ENCODE measurements at regions of chr17 and their contacts with region 1.

Region 1: DNA sequence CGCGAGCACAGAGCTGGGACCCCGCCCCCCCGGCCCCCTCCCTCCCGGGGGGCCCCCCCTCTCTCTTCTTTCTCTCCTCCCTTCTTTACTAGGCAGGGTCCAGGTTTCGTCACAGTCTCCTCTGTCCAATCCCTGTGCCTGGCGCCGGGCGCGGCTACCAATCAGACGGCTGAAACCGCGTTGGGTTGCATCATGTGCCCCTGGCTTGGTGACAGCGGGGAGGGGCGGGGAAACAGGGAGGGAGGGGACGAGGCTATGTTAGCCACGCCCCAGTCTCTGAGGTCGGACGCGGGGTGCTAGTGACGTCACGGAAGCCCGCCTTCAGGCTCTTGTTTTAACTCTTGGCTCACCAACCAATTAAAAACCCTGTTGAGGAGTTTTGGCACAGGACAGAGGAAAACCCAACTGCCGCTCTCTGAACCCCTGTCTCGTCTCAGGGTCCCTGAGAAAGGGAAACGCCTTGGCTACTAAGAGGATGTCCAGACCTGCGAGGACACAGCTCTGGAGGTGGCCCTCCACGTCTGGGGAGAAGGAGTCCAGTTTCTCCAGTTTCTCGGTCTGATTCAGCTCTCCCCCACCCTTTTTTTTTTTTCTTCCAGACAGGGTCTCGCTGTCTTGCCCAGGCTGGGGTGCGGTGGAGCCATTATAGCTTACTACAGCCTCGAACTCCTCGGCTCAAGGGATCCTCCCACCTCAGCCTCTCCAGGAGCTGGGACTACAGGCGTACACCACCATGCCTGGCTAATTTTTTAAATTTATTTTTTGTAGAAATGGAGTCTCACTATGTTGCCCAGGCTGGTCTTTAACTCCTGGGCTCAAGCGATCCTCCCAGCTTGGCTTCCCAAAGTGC is 439 bp upstream of the PLEKHH3 start:
- DNase-seq: peak; percentile 99
- H3K4me3 ChIP-seq: peak overlapping the region; percentile 89 to 91
- H3K27ac ChIP-seq: peak overlapping the region; percentile 95 to 96
- H3K4me1 ChIP-seq: peaks cover 72% of the 10 kb centered on the region
- H3K27me3 ChIP-seq: no peaks in the 10 kb centered on the region
- CTCF ChIP-seq: no peak
- POLR2A ChIP-seq: no peak

Region 2: GRCh38 chr17:42554250-42555121 is 122.7 kb before region 1 on chr17:
- intact Hi-C with region 1: no loop called
- DNase-seq: peak; percentile 92
- H3K4me3 ChIP-seq: peak overlapping the region; percentile 81 to 83
- H3K27ac ChIP-seq: peak overlapping the region; percentile 79 to 86
- H3K4me1 ChIP-seq: peaks cover 18% of the 10 kb centered on the region
- H3K27me3 ChIP-seq: no peaks in the 10 kb centered on the region
- CTCF ChIP-seq: no peak
- POLR2A ChIP-seq: no peak

Region 3: DNA sequence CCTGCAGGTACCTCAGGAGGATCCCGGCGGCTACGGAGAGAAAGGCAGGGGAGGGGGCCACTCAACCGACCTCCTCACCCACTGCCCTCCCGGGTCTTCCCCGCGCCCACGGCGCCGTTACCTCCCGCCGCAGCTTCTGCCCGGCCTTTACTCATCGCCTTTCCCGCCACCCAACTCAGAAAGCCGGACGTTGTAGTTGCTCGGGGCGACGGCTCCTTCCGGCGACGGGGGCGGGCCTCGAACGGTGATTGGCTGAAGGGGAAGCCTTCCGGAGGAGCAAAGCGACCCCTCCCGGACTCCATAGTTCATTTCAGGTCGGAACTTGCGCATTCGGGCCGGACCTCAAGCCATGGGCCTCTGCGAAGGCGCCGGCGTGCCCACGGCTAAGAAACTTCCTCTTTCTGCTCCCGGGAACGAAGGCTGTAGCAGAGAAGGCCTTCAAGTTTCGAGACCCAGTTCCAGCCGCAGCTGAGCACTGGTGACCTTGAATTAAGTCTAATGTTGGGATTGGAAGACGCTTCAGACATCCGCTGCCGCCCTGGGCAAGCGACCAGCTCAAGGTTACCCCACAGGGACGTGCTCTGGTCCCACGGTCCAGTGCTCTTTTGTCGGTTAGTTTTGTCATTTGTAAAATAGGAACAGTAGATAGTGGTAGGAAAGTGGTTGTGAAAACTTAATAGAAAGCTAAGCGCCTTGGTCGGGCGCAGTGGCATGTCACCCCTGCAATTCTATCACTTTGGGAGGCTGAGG is 99.5 kb before region 1 on chr17 and contains the start of gene PSMC3IP:
- intact Hi-C with region 1: loop called (anchors 10 kb)
- DNase-seq: peak; percentile 97
- H3K4me3 ChIP-seq: peak within 1 kb of the TSS; percentile 60 to 66
- H3K27ac ChIP-seq: peak within 1 kb of the TSS; percentile 40 to 87
- H3K4me1 ChIP-seq: peaks cover 12% of the 10 kb centered on the region
- H3K27me3 ChIP-seq: no peaks in the 10 kb centered on the region
- CTCF ChIP-seq: peak in 2 of 3 experiments; percentile 46 to 60
- POLR2A ChIP-seq: no peak
- total RNA-seq, gene PSMC3IP: 17.2 to 27.2 TPM

Measured in testis (tissue), 5 donors.